ENCODE measurements at regions of chr19 and their contacts with region 1.

Region 1: DNA sequence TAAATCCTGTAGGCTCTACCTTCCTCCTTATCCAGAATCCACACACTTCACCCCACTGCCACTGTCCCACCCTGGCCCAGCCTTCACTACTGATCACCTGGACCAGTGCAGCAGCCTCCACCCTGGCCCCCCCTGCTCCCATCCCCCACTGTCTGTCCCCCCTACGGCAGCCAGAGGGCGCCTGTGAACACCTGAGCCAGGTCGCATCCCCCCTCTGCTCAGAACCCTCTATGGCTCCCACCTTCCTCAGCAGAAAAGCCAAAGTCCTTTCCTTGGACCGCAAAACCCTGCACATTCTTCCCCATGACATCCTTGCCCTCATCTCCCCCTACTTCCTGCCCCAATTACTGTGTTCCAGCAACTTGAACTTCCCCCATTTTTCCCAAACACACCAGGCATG is 20.6 kb downstream of the ELAVL3 start:
- DNase-seq: no peak
- H3K4me3 ChIP-seq: no peak overlapping the region
- H3K27ac ChIP-seq: no peak overlapping the region
- H3K4me1 ChIP-seq: peaks cover 3 to 12% (median 5%) of the 10 kb centered on the region in 4 experiments
- H3K27me3 ChIP-seq: no peaks in the 10 kb centered on the region
- CTCF ChIP-seq: peak; percentile 55 to 72 (median 57)
- EP300 ChIP-seq: no peak
- POLR2A ChIP-seq: no peak
- RAD21 ChIP-seq: peak in 1 of 2 experiments; percentile 37; a peak in 1 of 4 replicates

Region 2: GRCh38 chr19:11335449-11336146 is 124.6 kb before region 1 on chr19:
- CTCF ChIA-PET with region 1: no interaction called
- POLR2A ChIA-PET with region 1: no interaction called
- DNase-seq: no peak
- H3K4me3 ChIP-seq: no peak overlapping the region
- H3K27ac ChIP-seq: no peak overlapping the region
- H3K4me1 ChIP-seq: peaks cover 0 to 4% (median 1%) of the 10 kb centered on the region in 4 experiments; a peak in 4 of 7 replicates
- H3K27me3 ChIP-seq: no peaks in the 10 kb centered on the region; a peak in 2 of 7 replicates
- CTCF ChIP-seq: no peak
- EP300 ChIP-seq: no peak
- POLR2A ChIP-seq: no peak
- RAD21 ChIP-seq: no peak

Region 3: DNA sequence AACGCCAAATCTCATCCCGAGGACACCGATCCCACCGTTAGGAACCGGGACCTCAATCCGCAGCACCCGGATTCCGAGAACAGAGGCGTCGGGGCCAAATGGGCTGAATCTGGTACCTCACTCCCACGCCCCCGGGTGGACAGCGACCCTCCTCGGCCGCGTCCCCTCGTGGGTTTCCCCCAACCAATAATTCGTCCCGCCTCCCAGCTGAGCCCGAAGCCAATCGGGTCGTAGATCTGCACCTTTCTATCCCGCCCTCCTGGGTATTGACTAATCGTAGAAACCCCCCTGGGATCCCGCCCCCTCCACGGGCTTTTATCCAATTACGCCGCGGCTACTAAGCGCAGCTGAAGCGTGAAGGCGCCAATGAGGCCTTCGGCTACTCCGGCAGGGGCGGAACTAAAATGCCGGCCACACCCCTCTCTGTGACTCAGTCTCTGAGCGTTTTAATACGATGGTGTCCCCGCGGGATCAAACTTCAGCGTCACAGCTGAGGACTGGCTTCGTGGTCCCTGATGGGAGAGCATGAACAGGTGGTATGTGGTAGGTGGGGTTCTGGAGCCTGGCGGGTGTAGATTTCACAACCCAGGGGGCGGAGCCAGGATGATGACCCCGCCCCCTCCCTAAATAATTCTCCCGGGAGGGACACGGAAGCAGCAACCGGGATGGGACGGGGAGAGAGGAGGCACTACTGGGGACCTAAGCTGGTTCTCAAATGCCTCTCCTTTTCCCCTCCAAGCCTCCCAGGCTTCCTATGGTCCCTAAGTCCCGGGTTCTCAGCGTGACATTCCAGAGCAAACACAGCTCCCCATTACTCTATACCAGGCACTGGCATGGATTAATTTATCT is 113.9 kb before region 1 on chr19 and contains the starts of genes CCDC159 and TMEM205:
- CTCF ChIA-PET with region 1: no interaction called
- POLR2A ChIA-PET with region 1: no interaction called
- DNase-seq: peak; percentile 96 to 97
- H3K4me3 ChIP-seq: peak within 1 kb of the TSS; percentile 63 to 94 (median 84)
- H3K27ac ChIP-seq: 0 out of 2 replicates have a peak within 1 kb of the TSS, but pooled peaks have one; percentile 37
- H3K4me1 ChIP-seq: peaks cover 0 to 10% (median 6%) of the 10 kb centered on the region in 4 experiments; a peak in 5 of 7 replicates
- H3K27me3 ChIP-seq: no peaks in the 10 kb centered on the region
- CTCF ChIP-seq: no peak
- EP300 ChIP-seq: no peak
- POLR2A ChIP-seq: peak in 1 of 2 experiments; percentile 31; a peak in 1 of 3 replicates
- RAD21 ChIP-seq: no peak
- total RNA-seq, gene CCDC159: 4.0 and 5.5 TPM in 2 replicates
- total RNA-seq, gene TMEM205: 73.5 and 78.2 TPM in 2 replicates

Region 4: DNA sequence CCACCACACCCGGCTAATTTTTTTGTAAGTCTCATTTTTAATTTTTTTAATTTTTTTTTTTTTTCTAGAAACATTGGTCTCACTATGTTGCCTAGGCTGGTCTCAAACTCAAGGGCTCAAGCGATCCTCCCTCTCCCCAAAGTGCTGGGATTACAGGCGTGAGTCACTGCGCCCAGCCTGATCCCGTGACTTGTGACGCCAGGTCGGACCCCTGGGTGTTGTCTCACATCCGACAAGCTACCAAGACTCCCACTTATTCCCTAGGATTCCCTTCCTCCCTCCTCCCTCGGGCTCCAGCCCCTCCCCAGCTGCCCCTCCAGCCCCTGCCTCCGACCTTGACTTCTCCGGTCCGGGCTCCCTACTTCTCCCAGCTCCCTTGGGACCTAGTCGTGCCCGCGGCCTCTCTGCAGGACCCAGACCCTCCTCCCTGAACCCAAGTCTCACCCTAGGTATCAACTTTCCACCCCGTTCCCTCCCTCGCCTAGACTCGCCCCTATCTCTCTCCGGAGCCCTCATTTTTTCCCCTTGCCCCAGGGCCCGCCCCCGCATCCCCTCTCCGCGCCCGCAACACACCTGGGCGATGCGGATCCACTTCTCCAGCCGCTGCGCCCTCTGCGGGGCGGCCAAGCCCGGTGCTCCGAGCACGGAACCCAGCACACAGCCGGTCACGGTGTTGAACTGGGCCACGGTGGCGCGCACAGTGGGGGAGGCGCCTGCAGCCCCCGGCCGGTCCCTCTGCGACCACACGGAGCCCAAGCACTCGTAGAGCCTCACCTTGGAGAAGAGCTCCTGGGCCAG is 54.2 kb before region 1 on chr19:
- CTCF ChIA-PET with region 1: no interaction called
- POLR2A ChIA-PET with region 1: no interaction called
- DNase-seq: peak in 1 of 2 experiments; percentile 87
- H3K4me3 ChIP-seq: peak overlapping the region in 1 of 4 experiments; percentile 47; a peak in 2 of 8 replicates
- H3K27ac ChIP-seq: 0 out of 2 replicates have a peak overlapping the region, but pooled peaks have one; percentile 49
- H3K4me1 ChIP-seq: peaks cover 0 to 6% (median under 1%) of the 10 kb centered on the region in 4 experiments; a peak in 4 of 7 replicates
- H3K27me3 ChIP-seq: no peaks in the 10 kb centered on the region
- CTCF ChIP-seq: peak; percentile 57 to 69 (median 63)
- EP300 ChIP-seq: no peak
- POLR2A ChIP-seq: no peak
- RAD21 ChIP-seq: peak; percentile 48 to 69; a peak in 3 of 4 replicates

Region 5: DNA sequence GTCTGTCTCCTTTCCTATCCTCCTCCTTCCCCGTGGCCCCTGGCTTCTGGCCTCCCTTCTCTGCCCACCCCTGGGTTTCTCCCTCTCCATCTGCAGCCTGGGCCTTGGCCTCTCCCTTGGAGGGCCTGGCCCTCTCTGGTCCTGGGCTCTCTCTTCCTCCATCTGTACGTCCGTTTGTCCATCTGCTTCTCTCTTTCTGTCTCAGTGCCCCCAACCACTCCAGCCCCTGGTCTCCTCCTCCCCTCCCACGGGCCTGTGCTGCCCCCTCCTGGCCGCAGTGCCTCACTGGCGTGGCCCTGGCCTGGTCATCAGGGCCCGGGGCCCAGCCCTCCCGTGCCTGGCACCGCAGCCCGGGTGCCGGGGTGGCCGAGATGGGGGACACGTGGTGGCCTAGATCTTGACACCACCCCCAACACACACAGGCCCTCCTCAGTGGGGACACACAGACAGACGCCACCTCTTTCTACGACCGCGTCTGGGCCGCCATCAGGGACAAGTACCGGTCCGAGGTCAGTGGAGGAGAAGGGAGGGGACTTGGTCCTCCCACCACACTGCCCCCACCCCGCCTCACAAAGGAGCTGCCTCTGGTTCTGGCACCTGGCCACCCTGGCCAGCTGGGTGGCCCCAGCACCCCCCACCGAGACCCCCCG is 13.4 kb before region 1 on chr19:
- CTCF ChIA-PET with region 1: interaction called, 11 read pairs
- POLR2A ChIA-PET with region 1: interaction called, 3 read pairs
- DNase-seq: peak in 1 of 2 experiments; percentile 95
- H3K4me3 ChIP-seq: no peak overlapping the region
- H3K27ac ChIP-seq: no peak overlapping the region
- H3K4me1 ChIP-seq: peaks cover under 1 to 4% (median 2%) of the 10 kb centered on the region in 4 experiments; a peak in 6 of 7 replicates
- H3K27me3 ChIP-seq: no peaks in the 10 kb centered on the region
- CTCF ChIP-seq: peak; percentile 91 to 99 (median 91)
- EP300 ChIP-seq: no peak
- POLR2A ChIP-seq: no peak
- RAD21 ChIP-seq: peak; percentile 90 to 95